Naive thymus-derived CD4-positive, alpha-beta T cell (primary cell): ENCODE measurements at regions of chr11 and their contacts with region 1.

Region 1: GRCh38 chr11:95674657-95675358 is 114.8 kb downstream of the FAM76B start:
- DNase-seq: peak in 4 of 9 donors; percentile 13 to 25 (median 18)
- ATAC-seq: peak; percentile 66
- H3K4me3 ChIP-seq: no peak overlapping the region
- H3K4me3 Mint-ChIP-seq: peak overlapping the region in 5 of 10 donors; percentile 1 to 37 (median 10)
- H3K27ac ChIP-seq: no peak overlapping the region
- H3K27ac Mint-ChIP-seq: peak overlapping the region in 7 of 9 donors; percentile 1 to 69 (median 47)
- H3K4me1 ChIP-seq: peaks cover 0 to 22% of the 10 kb centered on the region in 2 donors
- H3K4me1 Mint-ChIP-seq: peaks cover 15 to 65% (median 36%) of the 10 kb centered on the region in 7 donors
- H3K27me3 ChIP-seq: no peaks in the 10 kb centered on the region
- H3K27me3 Mint-ChIP-seq: no peaks in the 10 kb centered on the region

Region 2: DNA sequence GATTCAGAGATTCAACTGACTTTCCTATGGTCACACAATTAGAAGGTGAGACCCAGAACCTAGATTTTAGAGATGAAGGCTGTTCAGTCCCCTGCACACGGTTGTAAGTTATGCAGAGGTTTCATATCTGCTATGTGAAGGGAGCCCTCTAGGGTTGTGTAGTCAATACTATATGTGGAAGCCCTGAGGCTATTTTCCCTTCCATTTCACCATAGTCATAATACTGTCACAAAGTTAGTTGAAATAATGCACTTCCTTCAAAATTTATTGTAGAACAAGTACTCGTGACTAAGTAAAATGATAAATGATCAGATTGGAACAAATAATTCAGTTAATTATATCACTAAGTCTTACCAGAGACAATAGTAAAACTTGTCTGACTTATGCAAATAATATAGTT is 536.4 kb before region 1 on chr11:
- CTCF ChIA-PET with region 1: no interaction called
- POLR2A ChIA-PET with region 1: no interaction called
- intact Hi-C with region 1: no loop called
- DNase-seq: no peak
- ATAC-seq: peak; percentile 57
- H3K4me3 ChIP-seq: no peak overlapping the region
- H3K4me3 Mint-ChIP-seq: no peak overlapping the region
- H3K27ac ChIP-seq: no peak overlapping the region
- H3K27ac Mint-ChIP-seq: no peak overlapping the region
- H3K4me1 ChIP-seq: no peaks in the 10 kb centered on the region
- H3K4me1 Mint-ChIP-seq: peaks cover 0 to 9% (median 0%) of the 10 kb centered on the region in 7 donors
- H3K27me3 ChIP-seq: no peaks in the 10 kb centered on the region
- H3K27me3 Mint-ChIP-seq: peaks cover 0 to 10% (median 6%) of the 10 kb centered on the region in 5 donors

Region 3: GRCh38 chr11:95659088-95659487 is 15.7 kb before region 1 on chr11:
- CTCF ChIA-PET with region 1: no interaction called
- POLR2A ChIA-PET with region 1: interaction called, 6 read pairs
- intact Hi-C with region 1: loop called in 1 of 2 experiments (anchors 2 kb)
- DNase-seq: no peak
- ATAC-seq: no peak
- H3K4me3 ChIP-seq: no peak overlapping the region
- H3K4me3 Mint-ChIP-seq: peak overlapping the region in 2 of 10 donors; percentile 0 to 43
- H3K27ac ChIP-seq: no peak overlapping the region
- H3K27ac Mint-ChIP-seq: peak overlapping the region in 4 of 9 donors; percentile 30 to 82 (median 55)
- H3K4me1 ChIP-seq: peaks cover 0 to 7% of the 10 kb centered on the region in 2 donors
- H3K4me1 Mint-ChIP-seq: peaks cover 5 to 45% (median 33%) of the 10 kb centered on the region in 7 donors
- H3K27me3 ChIP-seq: no peaks in the 10 kb centered on the region
- H3K27me3 Mint-ChIP-seq: no peaks in the 10 kb centered on the region